ENCODE measurements at regions of chr20 and their contacts with region 1.

Region 1: DNA sequence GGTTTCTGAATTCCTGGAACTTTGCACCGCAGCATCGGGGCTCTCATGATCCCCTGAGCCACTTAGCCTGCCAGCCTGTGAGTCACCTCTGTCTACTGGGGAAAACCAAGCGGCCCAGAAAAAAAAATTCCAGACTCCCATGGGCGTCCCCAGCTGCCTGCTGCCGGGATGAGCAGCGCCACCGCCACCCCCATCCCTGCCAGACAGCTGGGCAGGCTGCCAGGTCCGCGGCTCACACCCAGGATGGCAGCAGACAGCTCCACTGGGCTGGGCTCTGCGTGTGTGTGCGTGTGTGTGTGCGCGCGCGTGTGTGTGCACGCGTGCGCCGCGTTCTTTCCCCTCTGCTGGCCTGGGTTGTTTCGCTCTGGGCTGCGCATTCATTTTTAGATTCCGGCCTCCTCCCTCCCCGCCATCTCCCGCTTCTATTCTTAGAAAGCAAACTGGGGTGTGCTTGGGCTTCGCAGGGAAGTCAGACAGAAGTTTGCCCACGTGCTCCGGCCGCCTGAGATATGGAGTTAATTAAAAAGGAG is 38.9 kb upstream of the PMEPA1 start:
- DNase-seq: peak; percentile 6
- H3K4me3 Mint-ChIP-seq: no peak overlapping the region
- H3K27ac Mint-ChIP-seq: peak overlapping the region; percentile 18
- H3K4me1 Mint-ChIP-seq: peaks cover 12% of the 10 kb centered on the region
- H3K27me3 Mint-ChIP-seq: peaks cover 23% of the 10 kb centered on the region

Region 2: DNA sequence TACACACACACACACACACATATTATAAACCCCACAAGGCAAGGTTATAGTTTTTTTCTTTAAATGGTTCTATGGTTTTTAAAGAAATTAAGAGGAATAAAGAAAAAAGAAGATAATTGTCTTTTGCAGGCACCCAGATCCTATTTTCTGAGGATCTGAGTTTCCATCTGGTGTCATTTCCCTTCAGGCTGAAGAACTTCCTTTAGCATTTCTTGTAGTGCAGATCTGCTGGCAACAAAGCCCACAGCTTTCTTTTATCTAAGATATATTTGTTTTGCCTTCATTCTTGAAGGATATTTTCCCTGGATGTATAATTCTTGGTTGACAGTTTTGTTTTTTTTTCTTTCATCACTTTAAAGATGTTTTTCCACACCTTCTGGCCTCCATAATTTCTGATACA is 18.8 kb after region 1 on chr20:
- intact Hi-C with region 1: loop called (anchors 1 kb)
- DNase-seq: no peak
- H3K4me3 Mint-ChIP-seq: no peak overlapping the region
- H3K27ac Mint-ChIP-seq: no peak overlapping the region
- H3K4me1 Mint-ChIP-seq: no peaks in the 10 kb centered on the region
- H3K27me3 Mint-ChIP-seq: peaks cover 12% of the 10 kb centered on the region

Region 3: GRCh38 chr20:58224974-58225373 is 476.3 kb after region 1 on chr20:
- intact Hi-C with region 1: loop called (anchors 5 kb)
- DNase-seq: no peak
- H3K4me3 Mint-ChIP-seq: no peak overlapping the region
- H3K27ac Mint-ChIP-seq: no peak overlapping the region
- H3K4me1 Mint-ChIP-seq: peaks cover 20% of the 10 kb centered on the region
- H3K27me3 Mint-ChIP-seq: peaks cover 53% of the 10 kb centered on the region